ENCODE measurements at regions of chr6 and their contacts with region 1.

Region 1: DNA sequence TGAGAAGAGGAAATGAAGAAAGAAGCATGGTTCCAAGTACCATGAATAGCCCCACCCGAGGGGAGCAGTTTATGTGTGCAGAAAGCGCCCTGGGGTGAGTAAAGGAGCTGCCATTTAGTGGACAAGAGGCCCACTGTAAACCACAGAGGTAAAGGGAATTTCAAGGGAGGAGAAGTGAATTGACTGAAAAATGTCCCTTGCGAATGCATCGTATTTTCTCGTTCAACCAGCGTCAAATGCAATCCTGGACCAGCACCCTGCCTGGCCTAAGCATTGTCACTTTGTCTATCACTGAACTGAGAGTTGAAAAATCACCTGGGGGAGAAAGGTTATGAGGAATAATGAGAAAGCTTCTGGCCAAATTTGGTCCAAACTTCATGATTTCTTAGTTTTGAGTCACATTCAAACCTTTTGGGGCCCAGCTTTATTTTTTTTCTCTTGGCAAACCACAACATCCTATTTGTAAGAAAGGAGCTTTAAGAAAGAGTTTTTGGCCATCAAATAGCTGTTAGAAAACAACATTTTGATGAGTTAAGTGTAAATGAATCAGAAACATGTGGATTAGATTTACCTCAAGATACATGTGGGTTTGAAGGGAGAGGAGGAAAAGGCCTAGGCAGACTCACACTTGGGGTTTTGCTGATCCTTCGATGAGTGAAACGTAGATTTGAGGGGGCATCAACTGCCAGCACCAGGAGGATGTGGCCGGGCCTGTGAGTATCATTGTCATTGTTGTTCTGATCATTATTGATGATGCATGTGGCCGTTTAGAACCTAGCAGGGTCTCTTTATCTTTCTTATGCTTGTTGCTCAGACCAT is 214.0 kb downstream of the CLIC5 start:
- DNase-seq: peak; percentile 78
- H3K4me3 Mint-ChIP-seq: peak overlapping the region; percentile 28
- H3K27ac Mint-ChIP-seq: peak overlapping the region; percentile 86
- H3K4me1 Mint-ChIP-seq: peaks cover 21% of the 10 kb centered on the region
- H3K27me3 Mint-ChIP-seq: no peaks in the 10 kb centered on the region

Region 2: DNA sequence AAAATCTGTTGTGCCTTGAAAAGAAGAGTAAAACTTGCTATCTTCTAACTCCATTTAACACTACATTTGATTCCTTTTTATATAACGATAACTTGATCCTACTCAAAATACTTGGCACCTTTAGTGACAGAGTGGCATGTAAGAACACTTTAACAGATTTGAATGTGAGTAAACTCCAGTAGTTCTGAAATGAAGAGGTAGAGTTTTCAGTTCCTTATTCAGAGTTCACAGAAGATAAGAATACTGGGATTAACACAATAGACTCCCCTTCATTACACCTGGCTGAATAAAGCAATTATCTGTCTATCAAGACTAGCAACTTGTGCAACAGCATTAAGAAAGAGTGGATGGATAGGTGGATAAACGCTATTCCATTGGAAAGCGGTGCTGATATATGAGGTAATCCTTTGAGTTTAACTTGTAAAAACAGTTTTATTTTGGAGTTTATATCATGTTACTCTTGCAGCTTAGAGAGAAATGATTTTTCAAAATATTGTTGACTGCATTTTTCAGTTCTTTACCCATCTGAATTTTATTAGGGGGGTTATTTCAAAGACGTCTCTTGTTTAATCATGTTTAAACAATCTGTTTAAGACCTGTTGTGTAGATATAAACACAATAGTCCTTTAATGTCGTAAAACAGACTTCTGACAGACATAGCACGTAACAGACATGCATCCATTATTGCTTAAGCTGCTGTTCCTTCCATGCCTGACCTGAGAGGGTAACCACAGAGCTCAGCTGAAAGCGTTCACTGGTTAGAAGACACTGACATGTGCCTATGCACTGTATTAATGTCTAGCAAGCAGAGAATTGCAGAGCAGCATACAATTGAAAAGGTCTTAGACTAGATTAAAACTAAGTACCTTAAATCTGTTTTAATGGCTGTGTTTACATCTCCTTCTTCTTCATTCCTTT is 321.6 kb before region 1 on chr6:
- intact Hi-C with region 1: loop called (anchors 10 kb)
- DNase-seq: no peak
- H3K4me3 Mint-ChIP-seq: no peak overlapping the region
- H3K27ac Mint-ChIP-seq: no peak overlapping the region
- H3K4me1 Mint-ChIP-seq: peaks cover 22% of the 10 kb centered on the region
- H3K27me3 Mint-ChIP-seq: no peaks in the 10 kb centered on the region

Region 3: GRCh38 chr6:45590225-45590624 is 211.5 kb before region 1 on chr6:
- intact Hi-C with region 1: loop called (anchors 5 kb)
- DNase-seq: peak; percentile 54
- H3K4me3 Mint-ChIP-seq: no peak overlapping the region
- H3K27ac Mint-ChIP-seq: peak overlapping the region; percentile 57
- H3K4me1 Mint-ChIP-seq: peaks cover 75% of the 10 kb centered on the region
- H3K27me3 Mint-ChIP-seq: no peaks in the 10 kb centered on the region

Region 4: GRCh38 chr6:45737331-45738056 is 64.2 kb before region 1 on chr6:
- intact Hi-C with region 1: loop called (anchors 1 kb)
- DNase-seq: peak; percentile 82
- H3K4me3 Mint-ChIP-seq: peak overlapping the region; percentile 68
- H3K27ac Mint-ChIP-seq: peak overlapping the region; percentile 85
- H3K4me1 Mint-ChIP-seq: peaks cover 53% of the 10 kb centered on the region
- H3K27me3 Mint-ChIP-seq: peaks cover 3% of the 10 kb centered on the region

Region 5: DNA sequence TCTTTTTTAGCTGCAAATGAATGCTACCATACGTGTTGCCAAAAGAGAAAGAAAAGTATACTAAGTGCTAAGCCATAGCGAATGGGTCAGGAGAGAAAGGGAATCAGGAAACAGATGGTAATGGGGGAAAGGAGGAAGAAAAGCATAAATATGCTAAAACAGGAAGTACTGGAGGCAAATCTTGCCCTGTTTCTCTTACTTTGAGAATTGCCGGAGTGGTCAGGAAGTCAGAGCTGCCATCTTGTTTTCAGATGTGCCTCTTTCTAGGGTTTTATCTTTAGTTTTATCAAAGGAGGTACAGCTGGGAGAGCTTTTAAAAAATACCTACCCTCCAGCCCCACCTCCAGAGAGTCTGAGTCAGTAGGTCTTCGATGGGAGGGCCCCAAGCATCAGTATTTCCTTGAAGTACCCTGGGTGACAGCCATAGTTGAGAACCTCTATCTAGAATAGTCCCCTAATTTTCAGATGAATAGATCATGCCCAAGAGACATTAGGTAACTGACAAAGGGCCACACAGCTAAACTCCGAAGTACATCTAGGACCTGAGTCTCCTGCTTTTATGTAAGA is 20.6 kb after region 1 on chr6:
- intact Hi-C with region 1: loop called (anchors 1 kb)
- DNase-seq: no peak
- H3K4me3 Mint-ChIP-seq: peak overlapping the region; percentile 44
- H3K27ac Mint-ChIP-seq: peak overlapping the region; percentile 71
- H3K4me1 Mint-ChIP-seq: peaks cover 24% of the 10 kb centered on the region
- H3K27me3 Mint-ChIP-seq: no peaks in the 10 kb centered on the region

Region 6: GRCh38 chr6:46011241-46012085 is 209.8 kb after region 1 on chr6:
- intact Hi-C with region 1: loop called (anchors 10 kb)
- DNase-seq: peak; percentile 91
- H3K4me3 Mint-ChIP-seq: peak overlapping the region; percentile 64
- H3K27ac Mint-ChIP-seq: peak overlapping the region; percentile 79
- H3K4me1 Mint-ChIP-seq: peaks cover 52% of the 10 kb centered on the region
- H3K27me3 Mint-ChIP-seq: peaks cover 9% of the 10 kb centered on the region